ENCODE measurements at regions of chr5 and their contacts with region 1.

Region 1: GRCh38 chr5:12477556-12477955 is 573.3 kb upstream of the CTNND2 start:
- DNase-seq: no peak
- ATAC-seq: no peak
- H3K4me3 ChIP-seq: no peak overlapping the region
- H3K27ac ChIP-seq: no peak overlapping the region
- H3K4me1 ChIP-seq: no peaks in the 10 kb centered on the region
- H3K27me3 ChIP-seq: no peaks in the 10 kb centered on the region
- CTCF ChIP-seq: no peak

Region 2: GRCh38 chr5:12392246-12392645 is 85.3 kb before region 1 on chr5:
- intact Hi-C with region 1: no loop called
- DNase-seq: no peak
- ATAC-seq: no peak
- H3K4me3 ChIP-seq: no peak overlapping the region
- H3K27ac ChIP-seq: no peak overlapping the region
- H3K4me1 ChIP-seq: no peaks in the 10 kb centered on the region
- H3K27me3 ChIP-seq: no peaks in the 10 kb centered on the region
- CTCF ChIP-seq: no peak

Region 3: GRCh38 chr5:12748897-12749296 is 271.3 kb after region 1 on chr5:
- intact Hi-C with region 1: loop called in 1 of 10 experiments (anchors 5 kb)
- DNase-seq: no peak
- ATAC-seq: no peak
- H3K4me3 ChIP-seq: no peak overlapping the region
- H3K27ac ChIP-seq: no peak overlapping the region
- H3K4me1 ChIP-seq: no peaks in the 10 kb centered on the region
- H3K27me3 ChIP-seq: no peaks in the 10 kb centered on the region
- CTCF ChIP-seq: no peak